ENCODE measurements at regions of chr12 and their contacts with region 1.

Region 1: DNA sequence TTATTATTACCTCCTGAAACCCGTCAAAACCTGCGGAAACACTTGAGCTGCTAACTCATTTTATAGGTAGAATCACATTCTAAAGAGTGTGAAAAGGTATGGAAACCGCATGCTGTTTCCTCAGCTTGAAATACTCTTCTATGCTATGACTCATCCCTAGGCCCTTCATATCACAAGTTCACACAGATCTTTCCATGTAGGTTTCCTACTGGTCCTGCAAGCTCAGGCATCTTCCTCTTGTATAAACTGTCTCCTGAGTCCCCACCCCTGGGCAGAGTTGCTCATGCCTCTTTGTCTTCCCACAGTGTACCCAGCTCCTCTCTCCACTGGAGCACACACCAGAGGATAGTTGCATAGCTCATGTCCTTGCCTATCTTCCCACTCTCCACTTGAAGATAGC is 84.7 kb downstream of the CMAS start:
- DNase-seq: no peak
- ATAC-seq: no peak
- H3K4me3 ChIP-seq: no peak overlapping the region
- H3K27ac ChIP-seq: no peak overlapping the region
- H3K4me1 ChIP-seq: no peaks in the 10 kb centered on the region
- H3K27me3 ChIP-seq: no peaks in the 10 kb centered on the region
- CTCF ChIP-seq: no peak

Region 2: DNA sequence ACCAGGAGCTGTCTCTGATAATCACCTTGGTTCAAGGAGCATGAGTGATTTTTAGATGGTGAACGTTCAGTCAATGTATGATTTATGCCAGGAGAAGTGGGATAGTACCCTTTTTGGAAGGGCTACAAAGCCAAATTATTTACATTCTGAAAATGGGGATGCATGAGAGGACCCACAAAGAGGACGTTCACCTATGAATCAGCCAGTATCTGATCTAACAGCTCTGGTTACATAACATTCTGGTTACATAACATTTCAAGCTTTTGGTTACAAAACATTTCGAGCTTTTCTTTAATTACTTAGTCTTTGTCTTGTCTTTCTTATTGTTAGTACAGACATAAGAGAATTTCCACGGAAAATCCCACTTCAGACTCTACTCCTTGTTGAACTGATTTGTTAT is 864.7 kb before region 1 on chr12:
- CTCF ChIA-PET with region 1: no interaction called
- POLR2A ChIA-PET with region 1: no interaction called
- intact Hi-C with region 1: no loop called
- DNase-seq: no peak
- ATAC-seq: no peak
- H3K4me3 ChIP-seq: no peak overlapping the region
- H3K27ac ChIP-seq: no peak overlapping the region
- H3K4me1 ChIP-seq: no peaks in the 10 kb centered on the region
- H3K27me3 ChIP-seq: peaks cover 5% of the 10 kb centered on the region; the same call in 1 of the 2 replicates
- CTCF ChIP-seq: no peak

Region 3: GRCh38 chr12:22088886-22089285 is 41.8 kb before region 1 on chr12:
- CTCF ChIA-PET with region 1: no interaction called
- POLR2A ChIA-PET with region 1: no interaction called
- intact Hi-C with region 1: loop called (anchors 2 kb)
- DNase-seq: peak; percentile 82
- ATAC-seq: no peak
- H3K4me3 ChIP-seq: no peak overlapping the region
- H3K27ac ChIP-seq: no peak overlapping the region
- H3K4me1 ChIP-seq: peaks cover 11% of the 10 kb centered on the region
- H3K27me3 ChIP-seq: no peaks in the 10 kb centered on the region
- CTCF ChIP-seq: no peak

Region 4: GRCh38 chr12:22160396-22161003 is 29.8 kb after region 1 on chr12:
- CTCF ChIA-PET with region 1: no interaction called
- POLR2A ChIA-PET with region 1: no interaction called
- intact Hi-C with region 1: no loop called
- DNase-seq: no peak
- ATAC-seq: no peak
- H3K4me3 ChIP-seq: no peak overlapping the region
- H3K27ac ChIP-seq: no peak overlapping the region
- H3K4me1 ChIP-seq: no peaks in the 10 kb centered on the region
- H3K27me3 ChIP-seq: 0 out of 2 replicates have a peak, but pooled peaks cover 8% of the 10 kb centered on the region
- CTCF ChIP-seq: no peak